A673 (cell line): ENCODE measurements at regions of chr18 and their contacts with region 1.

Region 1: GRCh38 chr18:72762515-72763122 is 105.2 kb downstream of the NETO1 start:
- DNase-seq: peak; percentile 82
- H3K4me3 ChIP-seq: no peak overlapping the region
- H3K27ac ChIP-seq: no peak overlapping the region
- H3K4me1 ChIP-seq: peaks cover 9% of the 10 kb centered on the region
- H3K27me3 ChIP-seq: no peaks in the 10 kb centered on the region
- CTCF ChIP-seq: peak; percentile 76

Region 2: GRCh38 chr18:73136134-73136533 is 373.5 kb after region 1 on chr18:
- CTCF ChIA-PET with region 1: no interaction called
- POLR2A ChIA-PET with region 1: no interaction called
- intact Hi-C with region 1: loop called (anchors 10 kb)
- DNase-seq: peak; percentile 5
- H3K4me3 ChIP-seq: no peak overlapping the region
- H3K27ac ChIP-seq: no peak overlapping the region
- H3K4me1 ChIP-seq: no peaks in the 10 kb centered on the region
- H3K27me3 ChIP-seq: no peaks in the 10 kb centered on the region
- CTCF ChIP-seq: peak; percentile 38; the same call in 1 of the 2 replicates

Region 3: GRCh38 chr18:73842795-73843394 is 1080.3 kb after region 1 on chr18:
- CTCF ChIA-PET with region 1: interaction called, 10 read pairs
- POLR2A ChIA-PET with region 1: no interaction called
- intact Hi-C with region 1: loop called (anchors 2 kb)
- DNase-seq: peak; percentile 61
- H3K4me3 ChIP-seq: no peak overlapping the region
- H3K27ac ChIP-seq: no peak overlapping the region
- H3K4me1 ChIP-seq: no peaks in the 10 kb centered on the region
- H3K27me3 ChIP-seq: no peaks in the 10 kb centered on the region
- CTCF ChIP-seq: peak; percentile 96

Region 4: DNA sequence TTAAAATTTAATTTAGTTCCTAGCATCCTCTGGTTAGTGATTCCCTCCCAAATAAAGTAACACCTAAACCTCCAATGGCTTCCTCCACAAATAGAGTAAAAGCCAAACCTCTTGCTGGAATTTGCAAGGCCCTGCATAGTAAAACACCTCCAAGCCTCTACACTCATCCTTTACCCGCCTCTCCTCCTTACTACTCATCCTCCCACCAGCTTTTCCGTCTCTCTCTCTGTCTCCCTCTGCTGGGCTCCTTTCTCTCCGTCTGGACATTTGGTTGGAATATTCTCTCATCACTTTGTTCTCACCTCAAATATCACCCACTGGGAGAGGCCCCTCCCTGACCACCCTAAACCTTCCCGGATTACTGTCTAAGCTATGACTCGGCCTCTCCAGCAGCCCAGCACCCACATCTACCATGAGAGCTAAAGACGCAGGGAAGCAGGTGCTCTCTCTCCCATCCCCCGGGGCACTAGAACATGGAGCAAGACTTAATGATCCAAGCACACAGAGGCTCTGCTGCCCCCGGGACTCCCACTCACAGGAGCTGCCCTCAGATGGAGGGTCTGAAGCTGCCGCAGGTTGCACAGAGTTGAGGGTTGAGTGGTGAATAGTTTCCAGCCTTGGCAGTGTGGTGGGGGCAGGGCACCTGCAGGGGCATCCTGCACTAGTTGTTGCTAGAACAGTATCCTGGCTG is 1217.8 kb after region 1 on chr18:
- CTCF ChIA-PET with region 1: interaction called, 5 read pairs
- POLR2A ChIA-PET with region 1: no interaction called
- intact Hi-C with region 1: loop called (anchors 5 kb)
- DNase-seq: peak; percentile 52
- H3K4me3 ChIP-seq: no peak overlapping the region
- H3K27ac ChIP-seq: no peak overlapping the region
- H3K4me1 ChIP-seq: no peaks in the 10 kb centered on the region
- H3K27me3 ChIP-seq: no peaks in the 10 kb centered on the region
- CTCF ChIP-seq: peak; percentile 69

Region 5: GRCh38 chr18:74116633-74117554 is 1354.3 kb after region 1 on chr18:
- CTCF ChIA-PET with region 1: no interaction called
- POLR2A ChIA-PET with region 1: no interaction called
- intact Hi-C with region 1: loop called (anchors 5 kb)
- DNase-seq: peak; percentile 61
- H3K4me3 ChIP-seq: no peak overlapping the region
- H3K27ac ChIP-seq: no peak overlapping the region
- H3K4me1 ChIP-seq: peaks cover 4% of the 10 kb centered on the region
- H3K27me3 ChIP-seq: no peaks in the 10 kb centered on the region
- CTCF ChIP-seq: peak; percentile 75

Region 6: GRCh38 chr18:74342416-74343043 is 1579.9 kb after region 1 on chr18:
- CTCF ChIA-PET with region 1: no interaction called
- POLR2A ChIA-PET with region 1: no interaction called
- intact Hi-C with region 1: loop called (anchors 10 kb)
- DNase-seq: peak; percentile 52
- H3K4me3 ChIP-seq: no peak overlapping the region
- H3K27ac ChIP-seq: no peak overlapping the region
- H3K4me1 ChIP-seq: no peaks in the 10 kb centered on the region
- H3K27me3 ChIP-seq: no peaks in the 10 kb centered on the region
- CTCF ChIP-seq: peak; percentile 71